Vagina (tissue), 2 donors: ENCODE measurements at regions of chr7 and their contacts with region 1.

Region 1: GRCh38 chr7:56009695-56010094 is 41.5 kb downstream of the PSPH start:
- DNase-seq: no peak
- H3K4me3 ChIP-seq: no peak overlapping the region
- H3K27ac ChIP-seq: no peak overlapping the region
- H3K4me1 ChIP-seq: no peaks in the 10 kb centered on the region
- H3K27me3 ChIP-seq: no peaks in the 10 kb centered on the region
- CTCF ChIP-seq: no peak
- POLR2A ChIP-seq: no peak

Region 2: GRCh38 chr7:56074371-56074791 is 64.7 kb after region 1 on chr7:
- intact Hi-C with region 1: loop called (anchors 10 kb)
- DNase-seq: no peak
- H3K4me3 ChIP-seq: no peak overlapping the region
- H3K27ac ChIP-seq: no peak overlapping the region
- H3K4me1 ChIP-seq: peaks cover 12% of the 10 kb centered on the region
- H3K27me3 ChIP-seq: no peaks in the 10 kb centered on the region
- CTCF ChIP-seq: peak; percentile 75 to 87 (median 81)
- POLR2A ChIP-seq: no peak